Activated CD8-positive, alpha-beta T cell treated with anti-CD3 and anti-CD28 coated beads for 36 hours (primary cell): ENCODE measurements at regions of chr14 and their contacts with region 1.

Region 1: GRCh38 chr14:103333754-103334643 is at the start of gene EIF5:
- DNase-seq: peak; percentile 99
- ATAC-seq: peak; percentile 92
- H3K4me3 Mint-ChIP-seq: peak within 1 kb of the TSS; percentile 87
- H3K27ac Mint-ChIP-seq: peak within 1 kb of the TSS; percentile 95
- H3K4me1 Mint-ChIP-seq: peaks cover 56% of the 10 kb centered on the region
- H3K27me3 Mint-ChIP-seq: no peaks in the 10 kb centered on the region
- CTCF ChIP-seq: no peak
- total RNA-seq, gene EIF5: 202 to 207 TPM

Region 2: GRCh38 chr14:103301512-103302354 is 32.3 kb before region 1 on chr14:
- CTCF ChIA-PET with region 1: no interaction called
- POLR2A ChIA-PET with region 1: no interaction called
- intact Hi-C with region 1: no loop called
- DNase-seq: no peak
- ATAC-seq: no peak
- H3K4me3 Mint-ChIP-seq: no peak overlapping the region
- H3K27ac Mint-ChIP-seq: no peak overlapping the region
- H3K4me1 Mint-ChIP-seq: no peaks in the 10 kb centered on the region
- H3K27me3 Mint-ChIP-seq: peaks cover 2% of the 10 kb centered on the region
- CTCF ChIP-seq: no peak

Region 3: DNA sequence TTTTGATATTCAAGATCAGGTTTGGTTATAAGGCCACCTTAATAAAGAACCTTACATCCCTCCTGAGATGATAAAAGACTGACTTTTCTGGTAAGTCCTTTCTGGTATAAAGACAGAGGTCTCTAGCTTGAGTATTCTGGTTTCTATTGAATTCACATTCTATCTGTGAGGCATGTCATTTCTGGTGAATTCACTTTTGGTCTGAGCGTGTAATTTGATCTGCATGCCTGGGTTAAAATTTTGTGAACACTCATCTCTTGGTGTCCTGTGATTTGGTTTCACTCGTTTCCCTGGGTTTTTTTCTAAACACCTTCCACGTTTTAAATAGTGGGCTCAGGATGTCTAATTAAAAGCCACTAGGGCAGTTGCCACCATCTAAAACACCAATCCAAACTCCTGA is 12.3 kb after region 1 on chr14:
- CTCF ChIA-PET with region 1: no interaction called
- POLR2A ChIA-PET with region 1: interaction called, 95 read pairs
- intact Hi-C with region 1: no loop called
- DNase-seq: no peak
- ATAC-seq: no peak
- H3K4me3 Mint-ChIP-seq: no peak overlapping the region
- H3K27ac Mint-ChIP-seq: no peak overlapping the region
- H3K4me1 Mint-ChIP-seq: peaks cover 5% of the 10 kb centered on the region
- H3K27me3 Mint-ChIP-seq: no peaks in the 10 kb centered on the region
- CTCF ChIP-seq: no peak

Region 4: DNA sequence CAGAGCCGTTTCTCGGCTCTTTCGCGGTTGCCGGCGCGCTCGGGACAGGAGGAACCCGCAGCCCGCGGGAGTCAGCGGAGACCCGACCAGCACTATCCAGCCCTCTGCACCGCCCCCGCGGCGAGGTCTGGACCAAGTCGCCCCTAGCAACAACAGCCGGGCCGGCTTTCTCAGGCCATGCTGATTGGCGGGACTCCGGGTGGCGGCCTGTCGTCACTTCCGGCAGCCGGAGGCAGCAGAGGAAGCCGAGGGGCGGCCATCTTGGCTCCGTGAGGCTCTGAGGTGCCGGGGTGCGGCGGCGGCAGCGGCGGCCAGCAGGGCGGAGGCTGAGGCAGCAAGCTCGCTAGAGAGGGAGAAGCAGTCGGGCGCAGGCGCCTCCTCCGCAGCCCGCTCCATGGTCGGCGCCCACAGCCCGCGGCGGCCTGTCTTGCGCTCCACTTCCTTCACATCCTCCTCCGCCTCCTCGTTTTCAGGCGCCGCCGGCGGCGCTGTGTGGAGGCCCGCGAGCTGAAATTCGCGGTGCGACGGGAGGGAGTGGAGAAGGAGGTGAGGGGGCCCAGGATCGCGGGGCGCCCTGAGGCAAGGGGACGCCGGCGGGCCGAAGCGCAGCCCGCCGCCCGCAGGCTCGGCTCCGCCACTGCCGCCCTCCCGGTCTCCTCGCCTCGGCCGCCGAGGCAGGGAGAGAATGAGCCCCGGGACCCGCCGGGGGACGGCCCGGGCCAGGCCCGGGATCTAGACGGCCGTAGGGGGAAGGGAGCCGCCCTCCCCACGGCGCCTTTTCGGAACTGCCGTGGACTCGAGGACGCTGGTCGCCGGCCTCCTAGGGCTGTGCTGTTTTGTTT is 51.4 kb after region 1 on chr14 and contains the start of gene MARK3:
- CTCF ChIA-PET with region 1: interaction called, 94 read pairs
- POLR2A ChIA-PET with region 1: interaction called, 10 read pairs
- intact Hi-C with region 1: loop called (anchors 5 kb)
- DNase-seq: peak; percentile 98
- ATAC-seq: peak; percentile 90
- H3K4me3 Mint-ChIP-seq: peak within 1 kb of the TSS; percentile 99
- H3K27ac Mint-ChIP-seq: peak within 1 kb of the TSS; percentile 93
- H3K4me1 Mint-ChIP-seq: peaks cover 35% of the 10 kb centered on the region
- H3K27me3 Mint-ChIP-seq: peaks cover 4% of the 10 kb centered on the region
- CTCF ChIP-seq: no peak
- total RNA-seq, gene MARK3: 68.4 to 69.2 TPM